Heart right ventricle (tissue), 16 donors: ENCODE measurements at regions of chr11 and their contacts with region 1.

Region 1: DNA sequence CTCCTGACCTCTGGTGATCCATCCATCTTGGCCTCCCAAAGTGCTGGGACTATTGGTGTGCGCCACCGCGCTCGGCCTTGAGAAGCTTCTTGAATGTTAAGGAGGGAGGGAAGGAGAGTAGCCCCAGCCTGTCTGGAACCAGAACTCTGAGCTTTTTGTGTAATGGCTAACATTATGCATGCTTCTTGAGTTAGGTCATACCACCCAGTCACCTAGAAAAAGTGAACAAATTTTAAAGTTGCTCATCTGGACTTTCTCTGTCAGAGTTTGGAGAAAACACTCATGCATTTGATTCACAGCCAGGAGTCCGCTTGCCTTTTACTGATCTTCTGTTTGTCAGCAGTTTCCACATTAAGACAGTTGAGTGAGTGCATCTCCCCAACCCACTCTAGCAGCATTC is 82.1 kb downstream of the PPP6R3 start:
- DNase-seq: no peak
- ATAC-seq: no peak
- H3K4me3 ChIP-seq: no peak overlapping the region
- H3K27ac ChIP-seq: peak overlapping the region in 3 of 10 donors; percentile 3 to 26 (median 20)
- H3K4me1 ChIP-seq: peaks cover 0 to 65% (median 53%) of the 10 kb centered on the region in 9 donors
- H3K27me3 ChIP-seq: no peaks in the 10 kb centered on the region
- CTCF ChIP-seq: no peak

Region 2: GRCh38 chr11:68517121-68517741 is 25.4 kb before region 1 on chr11:
- intact Hi-C with region 1: loop called in 1 of 10 experiments (anchors 5 kb)
- DNase-seq: no peak
- ATAC-seq: no peak
- H3K4me3 ChIP-seq: no peak overlapping the region
- H3K27ac ChIP-seq: no peak overlapping the region
- H3K4me1 ChIP-seq: peaks cover 0 to 53% (median 18%) of the 10 kb centered on the region in 9 donors
- H3K27me3 ChIP-seq: no peaks in the 10 kb centered on the region
- CTCF ChIP-seq: no peak